MCF 10A (cell line): ENCODE measurements at regions of chr1 and their contacts with region 1.

Region 1: GRCh38 chr1:182527680-182528079 is 61.4 kb downstream of the RNASEL start:
- DNase-seq: no peak
- H3K4me3 Mint-ChIP-seq: no peak overlapping the region
- H3K27ac Mint-ChIP-seq: no peak overlapping the region
- H3K4me1 Mint-ChIP-seq: no peaks in the 10 kb centered on the region
- H3K27me3 Mint-ChIP-seq: peaks cover 19% of the 10 kb centered on the region
- CTCF ChIP-seq: no peak

Region 2: GRCh38 chr1:182507665-182508064 is 20.0 kb before region 1 on chr1:
- CTCF ChIA-PET with region 1: interaction called, 10 read pairs
- POLR2A ChIA-PET with region 1: no interaction called
- intact Hi-C with region 1: no loop called
- DNase-seq: peak; percentile 53
- H3K4me3 Mint-ChIP-seq: no peak overlapping the region
- H3K27ac Mint-ChIP-seq: no peak overlapping the region
- H3K4me1 Mint-ChIP-seq: no peaks in the 10 kb centered on the region
- H3K27me3 Mint-ChIP-seq: peaks cover 11% of the 10 kb centered on the region
- CTCF ChIP-seq: no peak

Region 3: GRCh38 chr1:182761396-182762395 is 234.0 kb after region 1 on chr1:
- CTCF ChIA-PET with region 1: no interaction called
- POLR2A ChIA-PET with region 1: no interaction called
- intact Hi-C with region 1: no loop called
- DNase-seq: peak; percentile 46
- H3K4me3 Mint-ChIP-seq: no peak overlapping the region
- H3K27ac Mint-ChIP-seq: peak overlapping the region; percentile 93
- H3K4me1 Mint-ChIP-seq: peaks cover 7% of the 10 kb centered on the region
- H3K27me3 Mint-ChIP-seq: no peaks in the 10 kb centered on the region
- CTCF ChIP-seq: no peak

Region 4: DNA sequence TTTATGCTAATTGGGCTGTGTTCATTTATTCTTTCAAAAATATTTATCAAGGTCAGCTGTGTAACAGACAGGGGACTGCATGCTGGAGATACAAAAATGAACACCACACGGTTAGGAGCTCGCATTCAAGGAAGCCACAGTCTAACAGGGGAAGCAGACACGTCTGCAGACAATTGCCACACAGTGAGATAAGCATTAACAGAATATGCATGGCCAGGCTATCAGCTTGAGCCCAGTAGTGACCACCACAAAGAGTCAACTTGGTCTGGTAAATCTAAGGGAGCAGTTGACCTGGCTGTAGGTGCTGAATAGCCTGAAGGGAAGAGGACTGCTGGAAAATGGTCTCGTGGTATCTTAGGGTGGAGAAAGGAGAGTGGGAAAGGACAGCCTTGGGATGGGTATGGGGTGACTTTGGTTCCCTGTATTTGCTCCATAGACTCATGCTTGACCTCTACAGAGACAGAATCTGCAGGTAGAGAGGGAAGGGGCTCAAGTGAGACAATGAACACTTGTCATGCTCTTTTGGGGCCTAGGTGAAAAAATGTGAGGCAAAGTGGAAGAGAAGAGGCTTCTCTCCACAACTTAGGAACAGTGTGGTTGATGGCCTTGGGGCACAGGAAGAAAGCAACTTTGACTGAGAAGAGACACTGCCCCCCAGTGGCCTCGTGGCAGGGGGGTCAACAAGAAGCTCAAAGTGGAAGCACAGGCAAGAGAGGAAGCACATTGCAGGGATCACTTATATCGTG is 254.3 kb after region 1 on chr1:
- CTCF ChIA-PET with region 1: no interaction called
- POLR2A ChIA-PET with region 1: no interaction called
- intact Hi-C with region 1: no loop called
- DNase-seq: peak; percentile 82
- H3K4me3 Mint-ChIP-seq: no peak overlapping the region
- H3K27ac Mint-ChIP-seq: no peak overlapping the region
- H3K4me1 Mint-ChIP-seq: peaks cover 19% of the 10 kb centered on the region
- H3K27me3 Mint-ChIP-seq: no peaks in the 10 kb centered on the region
- CTCF ChIP-seq: peak; percentile 76